Mucosa of descending colon (tissue), 3 donors: ENCODE measurements at regions of chr4 and their contacts with region 1.

Region 1: DNA sequence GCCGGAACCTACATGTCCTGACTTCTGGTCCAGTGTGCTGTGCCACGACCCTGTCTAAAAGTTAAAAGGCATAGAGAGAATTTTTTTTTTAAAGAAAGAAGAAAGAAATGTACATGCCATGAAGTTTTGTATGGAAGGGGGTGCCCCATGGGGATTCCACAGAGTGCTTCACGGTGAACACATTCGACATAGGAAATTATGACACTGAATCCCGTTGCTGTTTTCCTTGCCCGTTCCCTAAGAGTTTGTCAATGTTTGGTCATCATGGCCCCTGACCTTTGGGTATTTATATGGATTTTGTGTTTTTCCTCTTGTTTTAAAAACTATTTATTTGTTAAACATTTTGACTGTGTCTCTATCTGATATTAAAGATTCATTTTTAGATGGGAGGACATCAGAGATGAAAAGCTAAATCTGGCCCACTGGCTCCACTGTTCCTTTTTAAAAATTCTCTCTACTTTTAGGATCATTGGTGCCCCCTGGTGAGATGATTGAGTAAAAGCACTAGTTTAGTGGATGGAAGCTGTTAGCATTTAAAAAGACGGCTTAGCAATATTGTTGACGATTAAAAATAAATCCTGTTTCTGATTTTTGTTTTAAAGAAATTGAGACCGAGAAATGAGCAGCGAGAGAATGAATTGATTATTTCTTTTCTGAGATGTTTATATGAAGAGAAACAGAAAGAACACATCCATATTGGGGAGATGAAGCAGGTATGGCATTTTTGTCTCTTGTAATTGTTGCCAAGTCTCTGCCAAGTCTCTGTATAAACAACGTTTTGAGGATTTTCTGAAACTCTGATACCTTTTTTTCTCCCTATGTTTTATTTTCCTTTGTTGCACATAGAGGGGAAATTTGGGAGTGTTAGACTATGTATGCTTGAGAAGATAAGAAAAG is 75.0 kb downstream of the PTTG2 start:
- DNase-seq: peak in 1 of 3 donors; percentile 70
- ATAC-seq: peak; percentile 48
- H3K4me3 ChIP-seq: no peak overlapping the region
- H3K4me1 ChIP-seq: no peaks in the 10 kb centered on the region
- CTCF ChIP-seq: peak; percentile 23

Region 2: GRCh38 chr4:37802068-37802666 is 233.1 kb before region 1 on chr4:
- intact Hi-C with region 1: loop called in 1 of 2 experiments (anchors 5 kb)
- DNase-seq: peak in 2 of 3 donors; percentile 57 to 77
- ATAC-seq: peak; percentile 98
- H3K4me3 ChIP-seq: no peak overlapping the region
- H3K4me1 ChIP-seq: no peaks in the 10 kb centered on the region
- CTCF ChIP-seq: peak; percentile 23

Region 3: DNA sequence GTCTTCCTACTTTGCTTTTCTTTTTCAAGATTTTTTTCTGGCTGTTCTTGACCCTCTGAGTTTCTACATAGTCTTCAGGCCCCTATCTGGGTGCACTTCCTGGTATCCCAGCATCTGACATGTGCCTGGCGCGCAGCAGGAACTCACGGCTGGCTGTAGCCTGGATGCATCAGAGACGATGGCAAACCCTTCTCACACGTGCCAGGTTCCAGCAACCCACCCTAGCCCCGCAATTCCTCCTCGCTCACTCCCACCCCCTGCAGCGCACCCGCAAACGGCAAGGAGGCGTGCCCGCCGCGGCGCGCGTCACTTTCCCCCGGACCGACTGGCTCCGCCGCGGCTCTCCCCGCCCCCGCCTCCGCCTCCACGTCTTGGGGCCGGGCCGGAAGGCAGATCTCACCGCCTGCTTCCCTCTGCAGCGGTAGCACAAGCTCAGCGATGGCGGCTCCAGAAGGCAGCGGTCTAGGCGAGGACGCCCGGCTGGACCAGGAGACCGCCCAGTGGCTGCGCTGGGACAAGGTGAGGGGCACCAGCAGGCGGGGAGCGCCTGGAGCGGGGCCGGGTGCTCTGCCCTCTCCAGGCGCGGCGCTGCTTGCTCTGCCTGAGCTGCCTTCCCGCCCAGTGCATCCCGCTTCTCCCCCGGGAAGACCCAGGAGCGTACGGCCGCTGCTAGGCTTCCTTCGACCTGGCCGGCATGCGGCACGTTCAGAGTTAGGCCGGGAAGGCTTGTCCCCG is 208.8 kb before region 1 on chr4 and contains the start of gene PGM2:
- intact Hi-C with region 1: loop called in 1 of 2 experiments (anchors 10 kb)
- DNase-seq: peak; percentile 92 to 95 (median 93)
- ATAC-seq: peak; percentile 99
- H3K4me3 ChIP-seq: peak within 1 kb of the TSS; percentile 55
- H3K4me1 ChIP-seq: no peaks in the 10 kb centered on the region
- CTCF ChIP-seq: no peak
- total RNA-seq, gene PGM2: 22.1 to 36.8 (median 27.4) TPM